Heart right ventricle (tissue), 16 donors: ENCODE measurements at regions of chr20 and their contacts with region 1.

Region 1: GRCh38 chr20:57539889-57540669 is 15.1 kb upstream of the CTCFL start:
- DNase-seq: no peak
- ATAC-seq: no peak
- H3K4me3 ChIP-seq: no peak overlapping the region
- H3K27ac ChIP-seq: no peak overlapping the region
- H3K4me1 ChIP-seq: peaks cover 0 to 1% (median 0%) of the 10 kb centered on the region in 9 donors
- H3K27me3 ChIP-seq: peaks cover 0 to 44% (median 11%) of the 10 kb centered on the region in 7 donors
- CTCF ChIP-seq: no peak

Region 2: GRCh38 chr20:57432874-57433491 is 107.1 kb before region 1 on chr20:
- intact Hi-C with region 1: no loop called
- DNase-seq: peak; percentile 65 to 66
- ATAC-seq: peak; percentile 59 to 89 (median 84)
- H3K4me3 ChIP-seq: no peak overlapping the region
- H3K27ac ChIP-seq: peak overlapping the region in 9 of 10 donors; percentile 43 to 71 (median 61)
- H3K4me1 ChIP-seq: peaks cover 13 to 72% (median 41%) of the 10 kb centered on the region in 9 donors
- H3K27me3 ChIP-seq: no peaks in the 10 kb centered on the region
- CTCF ChIP-seq: no peak

Region 3: DNA sequence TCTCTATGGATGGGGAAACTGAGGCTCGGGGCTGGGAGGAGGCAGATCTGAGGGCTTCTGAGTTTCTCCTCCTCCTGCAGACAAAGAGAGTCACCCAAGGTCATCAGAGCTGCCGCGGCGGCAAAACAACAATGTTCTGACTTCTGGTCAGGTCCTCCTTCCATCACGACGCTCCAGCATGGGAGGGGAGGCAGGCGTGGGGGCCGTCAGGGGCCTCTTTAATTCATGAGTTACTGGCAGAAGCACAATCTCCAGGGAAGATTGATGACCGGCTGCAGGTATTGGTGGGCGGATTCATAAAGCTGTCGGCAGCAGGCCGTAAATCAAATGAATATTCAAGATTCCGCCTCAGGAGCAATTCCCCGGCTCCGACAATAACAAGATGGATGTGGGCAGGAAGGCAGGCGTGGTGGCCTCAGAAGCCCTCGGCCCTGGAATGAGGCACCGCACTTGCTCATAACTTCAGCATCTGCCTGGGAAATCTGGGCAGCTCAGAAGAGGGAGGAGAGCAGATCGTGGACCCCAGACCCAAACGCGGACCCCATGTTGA is 39.9 kb after region 1 on chr20:
- intact Hi-C with region 1: loop called in 1 of 10 experiments (anchors 5 kb)
- DNase-seq: no peak
- ATAC-seq: no peak
- H3K4me3 ChIP-seq: no peak overlapping the region
- H3K27ac ChIP-seq: no peak overlapping the region
- H3K4me1 ChIP-seq: peaks cover 0 to 12% (median 0%) of the 10 kb centered on the region in 9 donors
- H3K27me3 ChIP-seq: peaks cover 0 to 84% (median 77%) of the 10 kb centered on the region in 7 donors
- CTCF ChIP-seq: no peak

Region 4: DNA sequence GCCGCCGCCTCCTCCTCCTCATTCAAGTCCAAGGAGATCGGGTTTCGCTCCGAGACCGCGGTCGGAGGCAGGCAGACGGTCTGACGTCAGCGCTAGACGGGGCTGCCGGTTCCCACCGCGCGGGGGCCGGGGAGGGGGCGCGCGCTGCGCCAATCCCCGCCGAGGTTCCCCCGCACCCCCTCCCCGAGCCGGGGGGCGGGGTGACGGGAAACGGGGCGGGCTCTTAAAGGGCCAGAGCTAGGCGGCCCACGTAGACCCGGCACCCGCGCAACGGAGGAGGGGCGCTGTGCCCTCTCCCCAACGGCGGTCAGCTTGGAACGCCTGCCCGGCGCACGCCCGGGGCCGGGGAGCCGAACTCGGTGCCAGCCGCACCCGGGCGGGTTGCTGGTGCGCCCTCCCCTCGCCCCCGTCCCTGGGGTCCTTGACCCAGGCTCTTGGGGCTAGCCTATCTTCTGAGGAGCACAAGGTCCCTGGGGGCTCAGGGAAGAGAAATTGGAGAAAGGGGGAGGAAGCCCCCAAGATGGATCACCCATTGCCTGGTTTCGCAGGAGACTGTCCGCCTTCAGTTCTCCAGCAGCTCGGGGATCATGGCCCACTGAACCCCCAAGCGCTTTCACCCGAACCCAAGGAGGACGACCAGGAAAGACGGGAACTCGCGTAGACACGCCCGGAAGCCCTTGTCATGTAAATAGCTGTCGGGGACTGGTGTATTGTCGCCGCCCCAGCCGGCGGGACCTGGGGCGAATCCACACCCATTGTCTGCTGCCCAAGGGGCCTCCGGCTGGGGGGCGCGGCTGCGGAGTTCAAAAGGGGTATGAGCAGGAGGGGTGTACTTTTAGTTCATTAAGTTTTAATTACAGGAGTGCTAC is 170.1 kb after region 1 on chr20 and contains the start of gene PMEPA1:
- intact Hi-C with region 1: no loop called
- DNase-seq: peak; percentile 94 to 95
- ATAC-seq: peak; percentile 91 to 95 (median 93)
- H3K4me3 ChIP-seq: peak within 1 kb of the TSS; percentile 51 to 92 (median 80)
- H3K27ac ChIP-seq: peak within 1 kb of the TSS; percentile 69 to 96 (median 91)
- H3K4me1 ChIP-seq: peaks cover 12 to 70% (median 55%) of the 10 kb centered on the region in 9 donors
- H3K27me3 ChIP-seq: peaks cover 0 to 33% (median 0%) of the 10 kb centered on the region in 7 donors
- CTCF ChIP-seq: peak in 4 of 9 donors; percentile 16 to 35 (median 18)
- total RNA-seq, gene PMEPA1: 16.1 to 39.2 (median 30.4) TPM